HAP-1 (cell line): ENCODE measurements at regions of chrX and their contacts with region 1.

Region 1: GRCh38 chrX:111270339-111270738 is at the start of gene CAPN6:
- DNase-seq: peak in 1 of 2 experiments; percentile 32
- H3K4me3 ChIP-seq: no peak within 1 kb of the TSS
- H3K4me1 ChIP-seq: no peaks in the 10 kb centered on the region
- H3K27me3 ChIP-seq: peaks cover 3% of the 10 kb centered on the region; the same call in 1 of the 2 replicates

Region 2: DNA sequence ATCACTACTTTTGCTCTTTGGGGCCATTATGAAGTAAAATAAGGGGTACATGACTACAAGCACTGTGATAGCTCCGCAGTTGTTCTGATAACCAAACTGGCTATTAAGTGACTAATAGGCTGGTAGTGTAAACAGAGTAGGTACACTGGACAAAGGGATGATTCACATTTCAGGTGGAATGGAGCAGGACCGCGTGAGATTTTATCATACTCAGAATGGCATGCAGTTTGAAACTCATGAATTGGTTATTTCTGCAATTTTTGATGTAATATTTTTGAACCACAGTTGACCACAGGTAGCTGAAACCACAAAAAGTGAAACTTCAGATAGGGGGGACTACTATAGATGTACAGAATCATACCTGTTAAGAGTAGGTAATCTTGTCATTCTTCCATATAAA is 118.6 kb before region 1 on chrX:
- in situ Hi-C with region 1: no loop called
- DNase-seq: no peak
- H3K4me3 ChIP-seq: no peak overlapping the region
- H3K4me1 ChIP-seq: no peaks in the 10 kb centered on the region
- H3K27me3 ChIP-seq: no peaks in the 10 kb centered on the region

Region 3: GRCh38 chrX:111168314-111168713 is 102.0 kb before region 1 on chrX:
- in situ Hi-C with region 1: no loop called
- DNase-seq: peak; percentile 65 to 85
- H3K4me3 ChIP-seq: no peak overlapping the region
- H3K4me1 ChIP-seq: peaks cover 9% of the 10 kb centered on the region; the same call in 1 of the 2 replicates
- H3K27me3 ChIP-seq: no peaks in the 10 kb centered on the region

Region 4: DNA sequence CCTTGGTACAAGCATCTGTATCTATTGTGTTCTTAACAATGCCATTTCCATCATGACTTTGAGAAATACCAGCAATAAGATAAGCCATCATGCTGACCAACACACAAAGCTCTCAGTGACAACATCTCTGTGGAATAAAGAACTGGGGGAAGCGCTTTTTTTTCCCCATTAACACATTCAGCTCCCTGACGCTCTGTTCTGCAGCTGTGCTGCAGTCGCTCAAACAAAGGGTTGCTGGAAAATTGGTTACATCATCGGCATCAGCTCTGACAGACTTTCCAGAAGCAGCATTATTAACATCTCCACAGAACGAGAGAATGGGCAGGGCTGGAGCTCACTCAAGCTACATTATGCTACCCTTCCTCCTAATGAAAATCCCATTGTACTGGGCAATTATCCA is 101.7 kb after region 1 on chrX:
- in situ Hi-C with region 1: no loop called
- DNase-seq: no peak
- H3K4me3 ChIP-seq: no peak overlapping the region
- H3K4me1 ChIP-seq: no peaks in the 10 kb centered on the region
- H3K27me3 ChIP-seq: no peaks in the 10 kb centered on the region; the same call in 1 of the 2 replicates

Region 5: GRCh38 chrX:111445486-111445885 is 175.1 kb after region 1 on chrX:
- in situ Hi-C with region 1: loop called (anchors 25 kb)
- DNase-seq: peak in 1 of 2 experiments; percentile 76
- H3K4me3 ChIP-seq: no peak overlapping the region
- H3K4me1 ChIP-seq: peaks cover 5% of the 10 kb centered on the region; the same call in 1 of the 2 replicates
- H3K27me3 ChIP-seq: peaks cover 4% of the 10 kb centered on the region; the same call in 1 of the 2 replicates